Sigmoid colon (tissue), 7 donors: ENCODE measurements at regions of chr5 and their contacts with region 1.

Region 1: DNA sequence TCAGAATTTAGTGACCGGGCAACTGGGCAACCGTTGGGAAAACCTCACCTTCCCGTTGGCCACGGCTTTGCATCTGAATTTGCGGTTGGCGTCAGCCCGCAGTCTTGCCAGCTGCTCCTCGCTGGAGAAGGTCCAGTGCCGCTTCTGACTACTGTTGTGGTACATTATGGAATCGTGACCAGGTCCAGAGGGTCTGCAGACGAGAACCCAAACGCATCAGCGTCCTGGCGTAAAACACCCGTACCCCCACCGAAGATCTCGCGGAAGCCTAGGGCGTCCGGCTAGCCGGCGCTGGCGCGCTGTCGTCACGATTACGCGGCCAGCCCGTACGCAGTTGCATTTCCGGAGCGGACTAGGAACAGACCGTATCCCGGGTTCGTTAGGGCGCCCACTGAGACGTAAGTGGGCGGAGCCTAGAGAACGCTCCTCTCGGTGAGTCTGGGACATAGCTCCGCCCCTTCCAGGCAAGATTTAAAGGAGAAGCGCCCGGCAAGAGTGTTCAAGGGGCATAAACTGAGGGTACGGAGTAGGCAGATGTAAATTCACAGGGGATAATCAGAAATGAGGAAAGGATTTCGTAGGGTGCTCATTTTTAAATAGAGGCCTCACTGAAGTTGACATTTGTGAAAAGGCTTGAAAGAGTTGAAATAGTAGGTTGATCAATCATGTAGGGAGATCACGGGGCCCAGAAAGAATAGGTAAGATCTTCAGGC is at the start of gene CCNH:
- DNase-seq: peak; percentile 99
- H3K4me3 ChIP-seq: peak within 1 kb of the TSS; percentile 55 to 83 (median 74)
- H3K27ac ChIP-seq: peak within 1 kb of the TSS; percentile 94 to 98 (median 96)
- H3K4me1 ChIP-seq: peaks cover 0 to 20% (median 14%) of the 10 kb centered on the region in 4 donors
- H3K27me3 ChIP-seq: no peaks in the 10 kb centered on the region
- CTCF ChIP-seq: no peak
- EP300 ChIP-seq: peak; percentile 64 to 97 (median 85)
- POLR2A ChIP-seq: peak; percentile 91 to 95
- total RNA-seq, gene CCNH: 79.2 to 92.7 (median 89.1) TPM

Region 2: DNA sequence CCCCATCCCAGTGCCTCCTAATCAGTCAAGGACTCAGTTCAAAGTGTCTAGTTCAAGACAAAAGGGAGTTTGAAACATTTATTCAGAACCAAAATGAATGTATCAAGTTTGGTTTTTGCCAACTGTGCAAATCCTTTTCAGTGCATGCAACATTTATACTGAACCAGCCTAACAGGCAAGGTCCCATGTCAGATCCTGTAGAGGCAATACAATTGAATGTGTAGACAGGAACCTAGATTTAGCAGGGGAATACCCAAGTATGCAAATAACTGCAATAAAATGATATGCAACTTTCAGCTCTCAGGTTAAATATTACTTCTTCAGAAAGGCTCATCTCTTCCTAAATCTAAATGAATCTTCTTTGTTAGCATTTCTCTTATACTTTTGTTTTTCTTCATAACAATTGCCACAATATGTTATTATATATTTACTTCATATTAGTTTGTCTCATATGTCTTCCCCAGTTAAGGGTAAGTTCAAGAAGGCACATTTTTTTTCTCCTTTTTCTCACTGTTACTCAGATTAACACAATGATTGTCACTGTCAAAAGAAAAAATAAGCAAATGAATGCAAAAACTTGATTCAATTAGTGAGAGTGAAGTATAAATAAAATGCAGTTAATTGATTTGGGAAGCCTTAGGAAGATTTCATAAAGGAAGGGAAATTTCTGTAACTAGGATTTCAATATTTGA is 309.0 kb before region 1 on chr5:
- intact Hi-C with region 1: no loop called
- DNase-seq: no peak
- H3K4me3 ChIP-seq: no peak overlapping the region
- H3K27ac ChIP-seq: no peak overlapping the region
- H3K4me1 ChIP-seq: no peaks in the 10 kb centered on the region
- H3K27me3 ChIP-seq: no peaks in the 10 kb centered on the region
- CTCF ChIP-seq: no peak
- EP300 ChIP-seq: no peak
- POLR2A ChIP-seq: no peak

Region 3: GRCh38 chr5:87267574-87268125 is 145.1 kb before region 1 on chr5 and contains the start of gene RASA1:
- intact Hi-C with region 1: loop called (anchors 5 kb)
- DNase-seq: peak; percentile 96
- H3K4me3 ChIP-seq: peak within 1 kb of the TSS; percentile 78 to 98 (median 81)
- H3K27ac ChIP-seq: peak within 1 kb of the TSS; percentile 85 to 96 (median 89)
- H3K4me1 ChIP-seq: peaks cover 0 to 28% (median 20%) of the 10 kb centered on the region in 4 donors
- H3K27me3 ChIP-seq: no peaks in the 10 kb centered on the region
- CTCF ChIP-seq: no peak
- EP300 ChIP-seq: no peak
- POLR2A ChIP-seq: peak; percentile 61 to 85
- total RNA-seq, gene RASA1: 22.7 to 30.0 (median 25.3) TPM

Region 4: DNA sequence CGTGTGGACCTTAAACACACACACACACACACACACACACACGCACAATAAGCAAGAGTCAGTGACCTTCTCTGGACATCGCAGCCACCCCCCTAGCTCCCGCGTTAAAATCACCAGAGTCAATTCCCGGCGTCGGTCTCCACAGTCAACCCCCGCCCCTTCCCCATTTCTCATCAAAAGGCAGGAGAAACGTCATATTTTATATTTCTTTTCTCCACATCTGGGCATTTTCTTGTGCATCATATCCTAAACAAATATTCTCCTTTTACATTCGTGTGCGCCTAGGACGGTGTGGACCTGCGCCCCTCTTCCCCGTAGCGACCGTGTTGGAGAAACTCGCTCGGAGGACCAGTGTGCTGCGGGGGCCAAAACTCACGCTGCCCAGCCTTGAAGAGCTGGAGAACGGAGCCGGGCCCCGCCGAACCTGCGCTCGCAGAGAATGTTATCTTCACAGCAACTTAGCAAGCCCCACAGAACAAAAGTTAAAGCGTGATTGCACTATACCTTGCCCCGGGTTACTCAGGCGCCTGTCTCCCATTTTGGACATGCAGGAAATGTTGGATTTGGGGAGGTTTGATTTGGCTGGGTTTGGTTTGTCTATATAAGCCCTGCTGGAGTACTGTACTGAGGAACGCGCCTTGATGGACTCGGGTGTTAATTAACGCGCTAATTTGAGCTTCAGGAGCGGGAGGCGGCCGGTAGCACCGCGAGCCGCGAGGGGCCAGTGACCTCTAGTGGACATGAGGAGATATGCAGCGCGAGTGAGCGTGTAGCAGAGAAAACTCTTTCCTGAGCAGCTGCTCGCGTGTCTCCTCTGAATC is 1277.8 kb after region 1 on chr5:
- intact Hi-C with region 1: loop called (anchors 5 kb)
- DNase-seq: peak; percentile 82
- H3K4me3 ChIP-seq: peak overlapping the region in 3 of 4 donors; percentile 9 to 28 (median 27)
- H3K27ac ChIP-seq: no peak overlapping the region
- H3K4me1 ChIP-seq: peaks cover 0 to 45% (median 31%) of the 10 kb centered on the region in 4 donors
- H3K27me3 ChIP-seq: peaks cover 80 to 100% (median 94%) of the 10 kb centered on the region in 3 donors
- CTCF ChIP-seq: peak; percentile 63 to 98 (median 83)
- EP300 ChIP-seq: no peak
- POLR2A ChIP-seq: no peak